Common myeloid progenitor, CD34-positive (primary cell): ENCODE measurements at regions of chr3 and their contacts with region 1.

Region 1: GRCh38 chr3:10738688-10739372 is 77.2 kb upstream of the SLC6A11 start:
- DNase-seq: peak; percentile 57 to 76 (median 75)
- H3K4me3 ChIP-seq: peak overlapping the region; percentile 3 to 74 (median 49)
- H3K27ac ChIP-seq: no peak overlapping the region
- H3K4me1 ChIP-seq: peaks cover 0 to 8% (median 2%) of the 10 kb centered on the region in 4 experiments
- H3K27me3 ChIP-seq: peaks cover 2 to 31% (median 11%) of the 10 kb centered on the region in 5 experiments

Region 2: GRCh38 chr3:10344147-10344943 is 394.5 kb before region 1 on chr3:
- CTCF ChIA-PET with region 1: interaction called, 28 read pairs
- POLR2A ChIA-PET with region 1: no interaction called
- DNase-seq: peak; percentile 42 to 63 (median 56)
- H3K4me3 ChIP-seq: no peak overlapping the region
- H3K27ac ChIP-seq: no peak overlapping the region
- H3K4me1 ChIP-seq: peaks cover 0 to 6% (median 3%) of the 10 kb centered on the region in 4 experiments
- H3K27me3 ChIP-seq: no peaks in the 10 kb centered on the region

Region 3: DNA sequence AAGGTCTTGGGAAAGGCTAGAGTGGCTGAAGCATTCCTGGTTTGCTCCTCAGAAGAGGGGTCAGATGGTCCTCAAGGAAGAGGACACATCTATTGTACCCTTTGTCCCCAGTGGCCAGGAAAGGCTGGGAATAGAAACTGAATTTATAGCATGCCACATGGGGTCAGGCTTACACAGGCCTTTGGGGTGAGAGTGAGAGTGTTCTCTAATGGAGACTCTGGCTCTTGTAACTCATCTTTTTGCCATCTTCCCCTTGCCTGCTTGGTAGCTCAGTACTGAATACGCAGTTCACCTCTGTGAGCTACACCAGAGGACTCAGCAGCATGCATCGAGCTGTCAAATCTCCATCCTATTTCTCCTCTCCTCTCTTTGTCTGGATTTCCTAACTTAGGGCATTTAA is 321.0 kb before region 1 on chr3:
- CTCF ChIA-PET with region 1: interaction called, 50 read pairs
- POLR2A ChIA-PET with region 1: interaction called, 3 read pairs
- DNase-seq: peak; percentile 25 to 53 (median 50)
- H3K4me3 ChIP-seq: no peak overlapping the region
- H3K27ac ChIP-seq: no peak overlapping the region
- H3K4me1 ChIP-seq: peaks cover 0 to 3% (median 0%) of the 10 kb centered on the region in 4 experiments
- H3K27me3 ChIP-seq: peaks cover 0 to 21% (median 0%) of the 10 kb centered on the region in 5 experiments